Aorta (tissue), 5 donors: ENCODE measurements at regions of chr5 and their contacts with region 1.

Region 1: DNA sequence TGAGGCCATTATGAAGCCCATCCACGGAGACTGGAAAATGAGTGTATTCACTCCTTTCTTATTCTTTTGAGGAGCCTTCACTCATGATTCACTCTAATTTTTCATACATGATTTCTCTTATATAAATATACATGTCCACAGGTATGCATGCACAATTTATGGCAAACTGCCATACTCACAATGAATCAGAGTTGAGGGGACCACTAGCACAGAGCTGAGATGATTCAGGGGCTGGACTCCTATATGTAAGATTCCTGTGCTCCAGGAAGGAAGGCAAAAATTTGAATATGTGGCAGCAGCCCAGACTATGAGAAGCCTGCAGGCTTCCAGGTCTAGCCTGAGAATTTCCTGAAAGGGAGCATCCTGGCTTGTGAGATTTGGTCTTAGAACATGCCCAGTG is 484.6 kb downstream of the PRELID2 start:
- DNase-seq: no peak
- ATAC-seq: no peak
- H3K4me3 ChIP-seq: no peak overlapping the region
- H3K27ac ChIP-seq: no peak overlapping the region
- H3K4me1 ChIP-seq: peaks cover 0 to 2% of the 10 kb centered on the region in 2 donors
- H3K27me3 ChIP-seq: no peaks in the 10 kb centered on the region

Region 2: GRCh38 chr5:145316282-145316681 is 34.2 kb before region 1 on chr5:
- intact Hi-C with region 1: no loop called
- DNase-seq: no peak
- ATAC-seq: no peak
- H3K4me3 ChIP-seq: no peak overlapping the region
- H3K27ac ChIP-seq: no peak overlapping the region
- H3K4me1 ChIP-seq: no peaks in the 10 kb centered on the region
- H3K27me3 ChIP-seq: no peaks in the 10 kb centered on the region

Region 3: DNA sequence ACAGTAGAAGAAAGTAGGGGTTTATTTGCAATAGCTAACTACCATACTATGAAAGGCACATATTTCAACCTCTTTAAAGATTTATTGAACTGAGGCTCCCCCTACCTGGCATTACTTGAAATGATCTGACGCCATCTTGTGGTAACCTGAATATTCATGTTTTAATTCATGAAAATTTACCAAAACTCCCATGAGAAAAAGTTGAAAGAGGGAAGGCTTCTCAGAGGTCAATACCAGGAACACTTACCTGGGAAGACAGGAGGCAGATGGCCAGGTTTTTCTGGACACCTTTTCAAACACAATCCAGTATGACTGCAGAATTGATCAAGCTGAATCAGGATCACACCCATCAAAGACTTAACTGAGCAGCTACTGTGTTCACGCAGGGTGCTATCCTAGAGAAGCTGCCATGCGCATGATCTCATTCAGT is 475.3 kb after region 1 on chr5:
- intact Hi-C with region 1: loop called in 1 of 2 experiments (anchors 10 kb)
- DNase-seq: no peak
- ATAC-seq: no peak
- H3K4me3 ChIP-seq: no peak overlapping the region
- H3K27ac ChIP-seq: no peak overlapping the region
- H3K4me1 ChIP-seq: no peaks in the 10 kb centered on the region
- H3K27me3 ChIP-seq: no peaks in the 10 kb centered on the region

Region 4: GRCh38 chr5:146068977-146069779 is 718.7 kb after region 1 on chr5:
- intact Hi-C with region 1: no loop called
- DNase-seq: no peak
- ATAC-seq: no peak
- H3K4me3 ChIP-seq: no peak overlapping the region
- H3K27ac ChIP-seq: no peak overlapping the region
- H3K4me1 ChIP-seq: peaks cover 4 to 11% of the 10 kb centered on the region in 2 donors
- H3K27me3 ChIP-seq: no peaks in the 10 kb centered on the region